ENCODE measurements at regions of chr12 and their contacts with region 1.

Region 1: GRCh38 chr12:4049298-4050080 is 176.3 kb upstream of the PARP11 start:
- DNase-seq: no peak
- H3K4me3 ChIP-seq: no peak overlapping the region
- H3K27ac ChIP-seq: no peak overlapping the region
- H3K4me1 ChIP-seq: peaks cover 0 to 7% (median 4%) of the 10 kb centered on the region in 4 experiments
- H3K27me3 ChIP-seq: peaks cover 0 to 2% (median 0%) of the 10 kb centered on the region in 5 experiments

Region 2: GRCh38 chr12:3445119-3445978 is 604.1 kb before region 1 on chr12:
- CTCF ChIA-PET with region 1: no interaction called
- POLR2A ChIA-PET with region 1: no interaction called
- DNase-seq: no peak
- H3K4me3 ChIP-seq: no peak overlapping the region
- H3K27ac ChIP-seq: no peak overlapping the region
- H3K4me1 ChIP-seq: no peaks in the 10 kb centered on the region
- H3K27me3 ChIP-seq: peaks cover 0 to 7% (median 2%) of the 10 kb centered on the region in 5 experiments

Region 3: GRCh38 chr12:4037747-4038312 is 11.7 kb before region 1 on chr12:
- CTCF ChIA-PET with region 1: interaction called, 17 read pairs
- POLR2A ChIA-PET with region 1: no interaction called
- DNase-seq: peak; percentile 28 to 49 (median 48)
- H3K4me3 ChIP-seq: no peak overlapping the region
- H3K27ac ChIP-seq: no peak overlapping the region
- H3K4me1 ChIP-seq: peaks cover 0 to 6% (median 0%) of the 10 kb centered on the region in 4 experiments
- H3K27me3 ChIP-seq: no peaks in the 10 kb centered on the region

Measured in common myeloid progenitor, CD34-positive (primary cell).